Psoas muscle (tissue), 8 donors: ENCODE measurements at regions of chr15 and their contacts with region 1.

Region 1: DNA sequence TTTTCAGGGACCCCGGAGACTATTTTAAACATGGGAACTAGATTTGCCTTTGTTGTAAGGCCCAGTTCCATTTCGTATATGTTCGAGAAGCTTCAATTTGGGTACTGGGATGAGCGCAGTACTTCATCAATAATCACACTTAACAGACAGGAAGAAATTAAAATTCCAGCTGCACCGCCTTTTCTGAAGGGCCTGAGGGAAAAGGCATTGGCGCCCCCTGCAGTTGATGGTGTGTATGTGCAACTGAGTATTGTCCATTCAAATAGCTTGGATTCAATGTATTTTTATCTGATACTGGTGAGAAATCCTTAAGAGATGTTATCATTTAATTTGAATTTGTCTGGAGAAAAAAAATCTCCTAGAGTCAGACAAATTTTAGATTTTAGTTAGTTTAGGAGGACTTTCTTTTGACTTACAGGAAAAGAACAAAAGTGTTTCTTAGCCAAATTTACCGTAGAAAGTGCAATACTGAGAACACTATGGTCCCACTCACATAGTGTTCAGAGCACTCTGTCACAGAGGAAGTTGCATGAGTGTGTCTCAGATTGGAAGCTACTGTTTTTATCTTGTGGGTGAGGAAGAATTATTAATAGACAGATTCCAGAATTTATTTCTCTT is 5.4 kb upstream of the ALDH1A2 start:
- DNase-seq: peak; percentile 34 to 68
- ATAC-seq: no peak
- H3K4me3 ChIP-seq: no peak overlapping the region
- H3K27ac ChIP-seq: no peak overlapping the region
- H3K4me1 ChIP-seq: no peaks in the 10 kb centered on the region
- H3K27me3 ChIP-seq: peaks cover 0 to 26% (median 2%) of the 10 kb centered on the region in 3 donors
- CTCF ChIP-seq: peak; percentile 71

Region 2: DNA sequence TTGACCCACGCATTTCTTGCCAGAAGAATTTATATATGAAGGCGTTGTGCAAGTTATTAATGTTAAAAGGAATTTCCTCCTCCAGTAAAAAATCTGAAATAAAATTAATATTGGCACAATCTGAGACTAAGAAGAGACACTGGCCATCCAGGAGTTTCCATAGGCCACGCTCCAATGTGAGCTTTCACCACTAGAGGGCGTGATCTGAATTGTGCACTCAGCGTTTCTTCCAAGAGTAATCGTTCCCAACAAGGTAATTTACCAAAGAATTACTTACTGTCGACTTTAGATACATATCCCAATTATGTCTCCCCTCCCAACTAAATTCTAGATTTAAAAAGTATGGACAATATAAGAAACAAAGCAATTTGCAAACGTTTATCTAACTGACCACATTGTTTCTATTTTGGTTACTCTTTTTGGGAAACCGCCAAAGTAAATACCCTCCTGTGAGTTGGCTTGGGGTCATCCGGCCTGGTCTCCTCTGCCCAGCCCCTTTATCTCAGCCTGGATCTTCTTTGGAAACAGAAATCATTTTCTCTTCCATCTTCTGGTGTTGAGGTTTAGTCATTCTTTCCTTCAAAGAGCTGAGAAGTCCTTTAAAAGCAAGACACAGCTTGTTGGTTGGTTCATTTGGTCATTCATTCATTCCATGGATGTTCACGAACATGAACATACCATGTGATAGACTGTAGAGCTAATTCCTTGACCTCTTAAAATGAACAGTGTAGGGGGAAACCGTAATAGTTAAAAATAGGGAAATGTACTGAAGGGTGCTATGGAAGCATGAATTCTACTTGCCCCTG is 338.2 kb before region 1 on chr15:
- intact Hi-C with region 1: loop called in 1 of 2 experiments (anchors 5 kb)
- DNase-seq: peak in 1 of 2 donors; percentile 29
- ATAC-seq: peak in 3 of 4 donors; percentile 61 to 81 (median 63)
- H3K4me3 ChIP-seq: no peak overlapping the region
- H3K27ac ChIP-seq: no peak overlapping the region
- H3K4me1 ChIP-seq: no peaks in the 10 kb centered on the region
- H3K27me3 ChIP-seq: no peaks in the 10 kb centered on the region
- CTCF ChIP-seq: peak; percentile 83

Region 3: DNA sequence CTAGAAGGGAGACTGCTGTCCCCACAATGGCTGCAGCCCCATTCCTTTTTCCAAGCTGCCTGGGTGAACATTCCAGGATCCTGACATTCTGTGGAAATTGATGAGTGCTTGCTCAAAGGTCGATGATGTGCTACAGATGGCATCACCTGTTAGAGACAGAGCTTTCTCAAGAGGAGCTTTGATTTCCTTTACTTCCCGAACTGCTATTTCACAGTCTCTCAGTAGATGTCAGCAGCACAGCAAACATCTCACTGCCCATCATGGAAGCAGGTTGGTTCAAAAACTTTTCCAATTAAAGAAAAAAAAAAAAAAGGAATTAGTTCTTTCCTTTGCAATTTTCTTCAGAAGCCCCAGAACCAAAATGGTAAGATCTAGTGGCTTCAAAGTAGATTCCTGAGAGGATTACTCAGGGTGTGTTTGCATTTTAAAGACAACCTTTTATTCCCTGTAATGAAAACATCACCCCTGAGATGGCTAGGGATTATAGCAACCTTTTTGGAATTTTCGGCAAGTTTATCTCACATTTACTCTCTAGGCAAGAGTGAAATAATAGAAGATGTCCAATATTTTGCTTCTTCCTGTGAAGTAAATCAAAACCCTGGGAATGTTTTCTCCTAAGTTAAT is 319.6 kb before region 1 on chr15:
- intact Hi-C with region 1: loop called in 1 of 2 experiments (anchors 5 kb)
- DNase-seq: no peak
- ATAC-seq: no peak
- H3K4me3 ChIP-seq: no peak overlapping the region
- H3K27ac ChIP-seq: no peak overlapping the region
- H3K4me1 ChIP-seq: no peaks in the 10 kb centered on the region
- H3K27me3 ChIP-seq: no peaks in the 10 kb centered on the region
- CTCF ChIP-seq: peak; percentile 35

Region 4: DNA sequence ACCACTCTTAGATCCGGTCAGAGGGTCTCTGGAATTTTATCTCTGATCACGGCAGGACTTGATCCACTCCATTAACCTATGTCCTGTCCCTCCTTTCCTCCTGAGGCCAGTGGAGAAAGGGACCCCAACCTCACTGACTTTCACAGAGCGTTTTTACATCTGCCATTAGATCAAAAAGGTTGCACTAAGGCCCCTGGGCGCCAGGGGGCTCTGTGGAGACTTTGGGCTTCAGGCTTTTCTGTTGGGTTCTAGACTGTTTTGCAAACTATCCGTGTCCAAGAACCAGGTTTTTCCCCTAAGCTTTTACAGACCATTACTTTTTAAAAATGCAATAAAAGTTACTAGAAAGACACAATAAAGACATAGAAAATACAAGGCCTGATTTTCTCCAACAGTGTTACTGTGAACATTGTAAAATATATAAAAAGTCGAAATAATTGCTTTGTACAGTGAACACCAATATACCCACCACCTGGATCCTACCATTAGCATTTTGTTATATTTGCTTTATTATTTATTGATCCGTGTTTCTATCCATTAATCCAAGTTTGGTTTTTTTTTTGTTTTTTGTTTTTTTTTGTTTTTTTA is 204.7 kb before region 1 on chr15:
- intact Hi-C with region 1: loop called in 1 of 2 experiments (anchors 5 kb)
- DNase-seq: peak; percentile 44 to 59
- ATAC-seq: peak in 1 of 4 donors; percentile 36
- H3K4me3 ChIP-seq: no peak overlapping the region
- H3K27ac ChIP-seq: no peak overlapping the region
- H3K4me1 ChIP-seq: no peaks in the 10 kb centered on the region
- H3K27me3 ChIP-seq: no peaks in the 10 kb centered on the region
- CTCF ChIP-seq: peak; percentile 53

Region 5: DNA sequence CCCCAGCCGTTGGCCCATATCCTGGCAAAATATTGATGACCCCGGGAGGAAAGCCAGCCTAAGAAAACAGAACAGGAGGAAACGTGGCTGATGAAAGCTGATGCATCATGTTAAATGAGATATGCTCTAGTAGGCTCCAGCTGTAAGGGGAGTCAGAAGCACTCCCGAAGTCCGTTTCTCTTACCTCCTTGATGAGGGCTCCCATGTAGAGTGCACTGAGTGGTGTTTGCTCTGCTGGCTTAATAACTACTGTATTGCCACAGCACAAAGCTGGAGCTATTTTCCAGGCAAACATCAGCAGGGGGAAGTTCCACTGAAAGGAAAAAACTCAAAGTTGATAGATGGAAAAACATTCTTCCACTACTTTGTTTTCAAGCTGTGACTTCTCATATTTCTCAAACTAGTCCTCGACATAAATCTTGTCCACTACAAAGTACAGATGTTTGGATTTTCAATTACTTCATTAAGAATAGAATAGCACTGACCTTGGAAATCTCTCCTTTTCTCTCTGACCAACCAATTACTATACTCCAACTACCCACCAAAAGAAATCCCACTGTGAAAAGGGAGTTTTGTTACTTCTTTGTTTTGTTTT is 78.1 kb before region 1 on chr15:
- intact Hi-C with region 1: no loop called
- DNase-seq: no peak
- ATAC-seq: no peak
- H3K4me3 ChIP-seq: no peak overlapping the region
- H3K27ac ChIP-seq: no peak overlapping the region
- H3K4me1 ChIP-seq: no peaks in the 10 kb centered on the region
- H3K27me3 ChIP-seq: peaks cover 0 to 2% (median 0%) of the 10 kb centered on the region in 3 donors
- CTCF ChIP-seq: no peak